ENCODE measurements at regions of chr15 and their contacts with region 1.

Region 1: DNA sequence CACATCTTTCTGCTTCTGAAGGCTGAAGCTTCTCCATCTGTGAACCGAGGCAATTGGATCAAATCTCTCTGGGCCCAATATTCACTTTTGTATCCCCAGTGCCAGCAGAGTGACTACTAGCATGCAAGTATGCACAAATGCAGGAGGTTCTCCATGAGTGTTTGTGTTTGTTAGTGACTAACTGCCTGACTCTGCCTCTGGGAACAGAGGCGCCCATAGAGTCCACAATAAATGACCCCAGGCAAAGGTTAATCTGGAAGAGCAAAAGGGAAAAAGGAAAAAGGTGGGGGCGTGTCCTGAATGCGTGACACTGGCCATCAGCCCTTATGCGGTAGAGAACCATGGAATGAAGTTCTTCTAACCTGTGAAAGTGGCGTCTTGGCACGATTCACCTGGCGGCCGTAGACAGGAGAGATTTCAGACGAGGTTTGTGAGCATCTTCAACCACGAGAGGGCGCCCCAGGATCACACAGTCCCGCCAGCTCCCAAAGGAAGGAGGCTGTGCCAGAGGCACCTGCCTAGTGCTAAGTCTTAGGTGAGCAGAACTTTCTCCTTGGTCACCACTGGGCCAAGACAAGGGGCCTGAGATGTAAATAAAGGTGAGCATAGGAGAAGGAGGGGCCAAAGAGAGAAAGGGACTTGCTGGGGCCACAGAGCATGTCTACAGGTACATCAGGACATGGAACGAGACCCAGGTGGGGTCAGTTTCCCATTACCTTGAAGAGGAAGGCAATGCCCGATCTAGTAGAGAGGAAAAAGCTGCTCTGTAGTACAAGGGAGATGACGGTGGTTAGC is 44.2 kb downstream of the RBPMS2 start:
- DNase-seq: peak; percentile 93

Region 2: GRCh38 chr15:64809649-64810496 is 78.7 kb after region 1 on chr15:
- intact Hi-C with region 1: loop called (anchors 2 kb)
- DNase-seq: peak; percentile 92

Region 3: DNA sequence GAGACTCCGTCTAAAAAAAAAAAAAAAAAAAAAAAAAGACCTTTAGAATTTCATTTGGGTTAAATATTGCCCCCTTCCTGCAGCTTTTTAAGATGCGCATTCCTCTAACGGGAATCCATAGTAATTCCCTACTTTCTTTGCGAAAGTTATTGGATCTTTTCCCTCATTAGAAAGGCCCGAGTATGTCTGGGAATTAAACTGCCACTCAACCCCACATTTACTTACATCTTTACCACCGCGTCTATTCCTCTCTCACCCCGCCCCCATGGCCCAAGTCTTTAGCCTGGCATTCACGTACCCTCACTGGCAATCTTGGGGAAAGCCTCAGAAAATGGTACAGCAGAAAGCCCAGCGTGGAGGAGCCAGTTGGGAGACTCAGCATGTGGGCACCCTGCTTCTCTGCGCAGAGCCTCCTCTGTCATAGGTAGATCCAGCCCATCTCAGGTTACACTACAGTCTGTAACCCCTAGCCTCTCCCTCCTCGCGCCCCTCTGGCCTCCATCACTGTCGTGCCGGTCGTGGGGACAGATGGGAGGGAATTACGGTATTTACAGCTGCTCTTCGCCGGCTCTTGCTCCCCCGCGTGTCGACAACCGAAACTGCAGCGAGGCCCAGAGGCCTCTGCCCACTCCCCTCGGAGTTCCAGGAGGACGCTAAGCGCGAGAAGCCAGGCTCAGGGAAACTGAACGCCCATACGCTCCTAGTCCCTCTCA is 174.1 kb after region 1 on chr15:
- intact Hi-C with region 1: loop called (anchors 5 kb)
- DNase-seq: peak; percentile 92

Measured in cardiac septum (tissue), 1 donor.